Prostate gland (tissue), 2 donors: ENCODE measurements at regions of chr16 and their contacts with region 1.

Region 1: GRCh38 chr16:74309789-74310781 is 13.5 kb downstream of the PSMD7 start:
- DNase-seq: peak; percentile 31
- H3K4me3 ChIP-seq: no peak overlapping the region
- H3K27ac ChIP-seq: no peak overlapping the region
- H3K4me1 ChIP-seq: no peaks in the 10 kb centered on the region
- H3K27me3 ChIP-seq: no peaks in the 10 kb centered on the region
- CTCF ChIP-seq: peak; percentile 41 to 71 (median 52)
- POLR2A ChIP-seq: no peak

Region 2: DNA sequence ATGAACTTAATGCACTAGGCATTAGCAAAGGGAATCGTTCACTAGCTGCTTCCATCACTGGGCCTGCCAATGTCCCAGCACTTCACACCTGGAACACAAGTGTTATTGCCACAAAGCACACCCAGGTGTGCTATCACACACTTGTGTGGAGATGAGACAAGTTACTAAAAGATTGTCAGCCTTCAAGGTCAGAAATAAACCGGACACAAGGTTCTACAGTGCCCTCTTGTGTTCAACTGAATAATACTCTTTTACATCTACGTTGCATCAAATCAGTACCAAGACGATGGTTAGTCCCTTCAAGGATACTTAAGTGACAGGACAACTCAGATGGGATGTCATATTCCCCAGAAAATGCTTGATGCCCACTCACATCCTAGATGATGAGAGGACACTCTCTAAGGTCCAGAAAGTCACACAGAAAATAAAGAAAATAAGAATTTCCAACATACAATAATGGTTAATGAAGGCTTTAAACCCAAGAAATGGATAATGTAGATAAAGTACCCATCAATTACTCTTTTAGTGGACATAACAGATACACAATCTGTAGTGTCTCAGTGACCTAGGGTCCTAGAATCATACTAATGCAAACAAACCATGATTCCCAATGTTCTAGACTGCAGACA is 313.2 kb after region 1 on chr16:
- intact Hi-C with region 1: loop called (anchors 10 kb)
- DNase-seq: no peak
- H3K4me3 ChIP-seq: no peak overlapping the region
- H3K27ac ChIP-seq: no peak overlapping the region
- H3K4me1 ChIP-seq: no peaks in the 10 kb centered on the region
- H3K27me3 ChIP-seq: no peaks in the 10 kb centered on the region
- CTCF ChIP-seq: peak in 3 of 4 experiments; percentile 50 to 54 (median 51)
- POLR2A ChIP-seq: no peak